ENCODE measurements at regions of chr1 and their contacts with region 1.

Region 1: GRCh38 chr1:12477936-12478611 is 139.9 kb downstream of the DHRS3 start:
- DNase-seq: peak; percentile 96
- H3K4me3 ChIP-seq: no peak overlapping the region
- H3K27ac ChIP-seq: peak overlapping the region; percentile 66
- H3K4me1 ChIP-seq: peaks cover 61% of the 10 kb centered on the region
- H3K27me3 ChIP-seq: no peaks in the 10 kb centered on the region
- CTCF ChIP-seq: no peak
- POLR2A ChIP-seq: no peak

Region 2: DNA sequence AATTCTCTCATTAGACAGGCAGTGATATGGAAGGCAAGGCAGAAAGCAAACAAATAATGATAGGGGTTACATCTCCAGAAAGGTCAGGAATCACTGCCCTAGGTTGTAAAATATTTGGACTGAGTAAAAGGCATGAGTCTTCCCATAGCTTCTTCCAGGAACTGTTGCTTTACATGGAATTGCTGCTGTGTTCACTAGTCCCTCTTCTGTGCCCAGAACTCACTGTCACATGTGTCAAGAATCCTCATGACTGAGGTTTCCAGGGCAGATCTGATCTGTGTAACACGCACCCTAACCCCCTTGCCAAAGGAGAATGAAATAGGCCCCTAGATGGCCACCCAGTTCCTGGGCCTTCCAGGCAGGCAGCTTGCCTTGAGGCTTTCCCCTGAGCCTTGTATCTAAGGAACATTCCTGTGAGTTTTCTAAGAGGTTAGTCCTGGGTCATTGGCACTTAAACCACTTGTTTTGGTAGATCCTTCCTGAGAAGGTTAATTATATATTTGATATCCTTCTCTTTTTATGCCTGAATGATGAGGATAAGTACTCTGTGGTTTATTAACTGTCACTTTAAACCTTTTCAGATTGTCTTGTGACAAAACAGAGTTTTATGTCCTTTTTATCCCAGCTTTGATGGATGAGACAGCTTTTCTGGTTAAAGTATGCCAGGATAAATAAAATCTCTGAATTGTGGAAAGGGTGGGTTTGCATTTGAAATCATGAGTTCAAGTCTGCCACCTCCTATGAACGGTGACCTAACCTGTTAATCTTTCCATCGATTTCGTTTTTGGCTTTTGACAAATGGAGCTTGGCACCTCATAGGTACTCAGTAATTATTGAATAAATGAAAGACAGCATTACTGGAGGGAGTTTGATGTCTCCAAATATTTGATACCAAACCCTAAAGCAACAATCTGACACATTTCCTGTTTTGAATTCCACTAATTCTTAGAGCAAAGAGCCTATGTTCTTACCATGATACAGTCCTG is 23.4 kb before region 1 on chr1:
- CTCF ChIA-PET with region 1: interaction called, 9 read pairs
- POLR2A ChIA-PET with region 1: interaction called, 6 read pairs
- dilution Hi-C with region 1: no loop called
- intact Hi-C with region 1: loop called (anchors 1 kb)
- DNase-seq: peak; percentile 81
- H3K4me3 ChIP-seq: peak overlapping the region in 1 of 3 experiments; percentile 6
- H3K27ac ChIP-seq: peak overlapping the region; percentile 88
- H3K4me1 ChIP-seq: peaks cover 62% of the 10 kb centered on the region
- H3K27me3 ChIP-seq: no peaks in the 10 kb centered on the region
- CTCF ChIP-seq: no peak
- POLR2A ChIP-seq: no peak

Region 3: DNA sequence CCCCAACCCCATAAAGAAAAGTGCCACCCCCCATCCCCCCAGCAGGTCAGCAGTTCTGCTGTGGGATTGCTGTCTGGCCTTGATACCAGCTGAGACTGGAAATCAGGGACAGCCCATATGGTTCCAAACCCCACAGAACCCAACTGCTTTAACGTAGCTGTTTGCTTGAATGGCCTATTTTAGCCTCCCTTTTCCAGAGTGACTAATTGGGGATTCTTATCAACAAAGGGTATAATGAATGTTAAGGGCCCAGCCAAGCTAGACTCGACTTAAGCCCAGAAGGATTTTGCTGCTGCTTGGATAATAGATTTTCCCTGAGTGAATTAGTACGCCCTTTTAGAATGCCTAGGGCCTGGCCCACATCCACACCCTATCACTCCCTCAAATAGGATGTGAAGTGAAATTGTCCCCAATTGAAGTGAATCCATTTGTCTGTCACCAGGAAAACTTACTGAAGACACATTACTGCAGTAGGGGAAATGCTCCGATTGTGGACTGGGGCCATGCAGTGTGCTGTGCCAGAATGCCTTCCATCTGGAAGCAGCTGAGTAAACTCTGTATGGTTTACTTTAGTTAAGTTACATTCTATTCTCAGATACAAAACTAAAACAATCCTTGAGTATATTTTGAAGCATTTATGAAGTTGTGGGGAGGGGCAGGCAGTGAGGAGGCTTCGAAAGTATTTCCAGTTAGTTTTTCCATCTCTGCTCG is 17.0 kb before region 1 on chr1:
- CTCF ChIA-PET with region 1: interaction called, 9 read pairs
- POLR2A ChIA-PET with region 1: interaction called, 3 read pairs
- dilution Hi-C with region 1: no loop called
- intact Hi-C with region 1: loop called (anchors 1 kb)
- DNase-seq: peak; percentile 97
- H3K4me3 ChIP-seq: no peak overlapping the region
- H3K27ac ChIP-seq: peak overlapping the region; percentile 64
- H3K4me1 ChIP-seq: peaks cover 36% of the 10 kb centered on the region
- H3K27me3 ChIP-seq: no peaks in the 10 kb centered on the region
- CTCF ChIP-seq: no peak
- POLR2A ChIP-seq: no peak

Region 4: DNA sequence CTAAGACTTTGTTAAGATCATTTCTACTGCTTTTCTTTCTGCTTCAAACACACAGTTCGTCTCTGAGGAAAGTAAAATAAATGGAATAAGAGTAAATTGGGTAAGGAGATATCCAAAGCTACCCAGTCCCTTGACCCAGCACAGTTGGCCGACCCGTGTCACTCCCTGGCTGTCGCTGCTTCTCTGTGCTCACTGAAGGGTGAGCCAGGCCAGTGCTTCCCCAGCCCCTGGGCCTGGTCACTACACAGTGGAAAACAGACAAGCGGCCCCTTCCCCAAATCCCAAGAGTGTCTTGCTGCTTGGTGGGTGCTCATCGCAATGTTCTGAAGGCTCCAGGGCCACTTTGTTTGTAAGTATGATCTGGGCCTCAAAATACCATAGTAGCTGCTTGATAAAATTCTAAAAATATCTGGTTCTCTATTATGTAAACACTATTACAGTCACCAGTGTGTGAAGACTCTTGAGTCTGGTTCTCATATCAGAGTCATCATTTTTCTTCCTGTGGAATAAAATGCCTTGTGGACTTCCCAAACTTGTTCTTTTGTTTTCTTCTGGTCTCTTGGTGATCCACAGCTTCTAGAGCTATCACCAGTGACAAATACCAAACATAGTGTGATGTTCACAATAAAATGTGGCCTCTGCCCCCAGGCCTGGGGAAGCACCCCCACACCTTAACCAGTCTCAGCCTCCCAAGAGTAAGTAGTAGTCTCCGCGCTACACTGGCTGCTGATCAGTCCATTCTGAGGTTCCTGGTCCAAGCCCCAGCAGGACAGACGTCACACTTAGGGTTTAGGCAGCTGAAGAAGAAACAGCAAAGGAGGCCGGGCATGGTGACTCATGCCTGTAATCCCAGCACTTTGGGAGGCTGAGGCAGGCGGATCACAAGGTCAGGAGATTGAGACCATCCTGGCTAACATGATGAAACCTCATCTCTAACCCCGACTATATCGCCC is 33.7 kb after region 1 on chr1:
- CTCF ChIA-PET with region 1: interaction called, 4 read pairs
- POLR2A ChIA-PET with region 1: no interaction called
- dilution Hi-C with region 1: no loop called
- intact Hi-C with region 1: loop called (anchors 2 kb)
- DNase-seq: peak; percentile 13
- H3K4me3 ChIP-seq: no peak overlapping the region
- H3K27ac ChIP-seq: no peak overlapping the region
- H3K4me1 ChIP-seq: peaks cover 11% of the 10 kb centered on the region
- H3K27me3 ChIP-seq: no peaks in the 10 kb centered on the region
- CTCF ChIP-seq: no peak
- POLR2A ChIP-seq: no peak

Region 5: GRCh38 chr1:12539705-12540579 is 61.9 kb after region 1 on chr1:
- CTCF ChIA-PET with region 1: no interaction called
- POLR2A ChIA-PET with region 1: no interaction called
- dilution Hi-C with region 1: no loop called
- intact Hi-C with region 1: loop called (anchors 1 kb)
- DNase-seq: peak; percentile 70
- H3K4me3 ChIP-seq: no peak overlapping the region
- H3K27ac ChIP-seq: no peak overlapping the region
- H3K4me1 ChIP-seq: peaks cover 21% of the 10 kb centered on the region
- H3K27me3 ChIP-seq: no peaks in the 10 kb centered on the region
- CTCF ChIP-seq: no peak
- POLR2A ChIP-seq: no peak

Region 6: DNA sequence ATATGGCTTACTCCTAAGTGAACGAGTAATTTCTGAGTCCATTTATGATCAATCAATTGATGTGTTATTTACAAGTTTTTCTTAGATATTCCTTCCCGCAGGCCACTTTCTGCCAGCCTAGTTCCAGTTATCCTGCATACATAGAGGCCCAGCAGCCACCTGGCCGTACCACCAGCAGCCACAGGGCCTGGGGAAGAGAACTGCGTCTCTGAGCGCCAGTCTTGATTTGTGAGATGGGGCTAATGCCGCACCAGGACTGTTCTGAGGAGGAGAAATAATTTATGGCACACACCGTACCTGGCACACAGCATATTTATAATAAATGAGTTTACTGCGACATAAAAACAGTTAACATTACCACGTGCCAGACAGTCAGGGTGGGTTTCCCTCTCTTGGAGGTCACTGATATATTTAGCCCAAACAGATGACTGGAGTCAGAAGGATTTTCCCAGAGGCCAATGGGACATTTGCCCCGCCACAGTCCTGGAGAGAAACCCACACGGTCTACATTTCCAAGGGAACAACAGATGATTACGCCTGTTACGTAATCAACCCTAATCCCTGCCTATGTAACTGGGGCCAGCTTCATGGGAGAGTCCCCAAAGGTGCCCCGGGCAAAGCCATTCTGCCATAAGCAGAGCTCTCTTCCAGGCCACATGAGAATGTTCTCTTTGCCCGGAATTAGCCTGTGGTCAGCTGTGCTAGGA is 101.9 kb after region 1 on chr1:
- CTCF ChIA-PET with region 1: no interaction called
- POLR2A ChIA-PET with region 1: no interaction called
- dilution Hi-C with region 1: no loop called
- intact Hi-C with region 1: no loop called
- DNase-seq: no peak
- H3K4me3 ChIP-seq: no peak overlapping the region
- H3K27ac ChIP-seq: no peak overlapping the region
- H3K4me1 ChIP-seq: no peaks in the 10 kb centered on the region
- H3K27me3 ChIP-seq: no peaks in the 10 kb centered on the region
- CTCF ChIP-seq: no peak
- POLR2A ChIP-seq: no peak

Region 7: DNA sequence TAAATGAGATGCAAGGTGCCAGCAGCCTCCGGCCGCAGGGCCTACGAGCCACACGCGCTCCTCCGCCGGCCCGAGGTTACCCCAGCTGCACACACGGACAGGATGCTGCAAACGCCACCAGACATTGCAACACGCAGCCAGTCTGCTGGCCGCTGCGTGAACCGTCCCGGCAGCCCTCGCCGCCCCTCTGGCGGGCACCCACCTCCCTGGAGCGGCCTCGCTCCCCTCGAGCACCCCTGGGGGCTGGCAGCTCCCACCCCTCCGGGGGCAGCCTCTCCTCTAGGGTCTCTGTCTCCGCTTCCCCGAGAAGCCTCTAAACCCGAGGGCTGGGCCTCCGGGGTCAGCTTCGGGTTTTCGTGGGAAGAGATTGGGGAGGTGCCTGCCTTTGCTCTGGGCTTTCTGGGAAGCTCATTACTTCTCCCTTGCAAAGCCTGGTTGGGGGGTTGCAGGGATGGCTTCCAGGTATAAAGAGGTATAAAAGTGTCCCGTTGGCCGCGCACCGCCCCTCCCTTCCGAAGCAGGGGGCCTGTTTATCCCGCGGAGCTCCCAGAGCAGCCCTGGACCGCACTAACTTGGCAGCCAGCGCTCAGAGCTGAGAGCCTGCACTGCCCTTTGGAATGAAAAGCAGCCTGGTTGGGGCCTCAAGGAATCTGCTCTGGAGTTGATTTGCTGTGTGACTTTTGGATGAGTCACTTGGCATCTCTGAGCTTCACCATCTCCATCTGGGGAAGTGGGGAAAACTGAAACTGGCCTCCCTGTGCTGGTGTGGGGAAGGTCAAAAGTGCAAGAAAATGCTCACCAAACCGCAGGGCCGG is 118.1 kb after region 1 on chr1:
- CTCF ChIA-PET with region 1: interaction called, 3 read pairs
- POLR2A ChIA-PET with region 1: interaction called, 4 read pairs
- dilution Hi-C with region 1: no loop called
- intact Hi-C with region 1: loop called (anchors 1 kb)
- DNase-seq: peak; percentile 96
- H3K4me3 ChIP-seq: no peak overlapping the region
- H3K27ac ChIP-seq: peak overlapping the region; percentile 93
- H3K4me1 ChIP-seq: peaks cover 28% of the 10 kb centered on the region
- H3K27me3 ChIP-seq: no peaks in the 10 kb centered on the region
- CTCF ChIP-seq: no peak
- POLR2A ChIP-seq: peak; percentile 12

Region 8: GRCh38 chr1:12604114-12604874 is 126.2 kb after region 1 on chr1:
- CTCF ChIA-PET with region 1: no interaction called
- POLR2A ChIA-PET with region 1: no interaction called
- dilution Hi-C with region 1: no loop called
- intact Hi-C with region 1: loop called (anchors 1 kb)
- DNase-seq: peak; percentile 99
- H3K4me3 ChIP-seq: peak overlapping the region in 1 of 3 experiments; percentile 15
- H3K27ac ChIP-seq: peak overlapping the region; percentile 95
- H3K4me1 ChIP-seq: peaks cover 38% of the 10 kb centered on the region
- H3K27me3 ChIP-seq: no peaks in the 10 kb centered on the region
- CTCF ChIP-seq: no peak
- POLR2A ChIP-seq: peak; percentile 38

Measured in endothelial cell of umbilical vein (primary cell).